ENCODE measurements at regions of chr5 and their contacts with region 1.

Region 1: GRCh38 chr5:172770675-172771438 is at the start of gene DUSP1:
- DNase-seq: peak; percentile 100
- H3K4me3 ChIP-seq: peak within 1 kb of the TSS; percentile 88 to 98 (median 90)
- H3K27ac ChIP-seq: peak within 1 kb of the TSS; percentile 99 to 100 (median 100)
- H3K4me1 ChIP-seq: peaks cover 31 to 69% (median 57%) of the 10 kb centered on the region in 4 donors
- H3K27me3 ChIP-seq: peaks cover 0 to 8% (median 0%) of the 10 kb centered on the region in 4 donors
- CTCF ChIP-seq: peak in 2 of 3 experiments; percentile 21 to 42
- EP300 ChIP-seq: peak; percentile 79
- POLR2A ChIP-seq: peak; percentile 100
- total RNA-seq, gene DUSP1: 455 to 718 (median 676) TPM

Region 2: DNA sequence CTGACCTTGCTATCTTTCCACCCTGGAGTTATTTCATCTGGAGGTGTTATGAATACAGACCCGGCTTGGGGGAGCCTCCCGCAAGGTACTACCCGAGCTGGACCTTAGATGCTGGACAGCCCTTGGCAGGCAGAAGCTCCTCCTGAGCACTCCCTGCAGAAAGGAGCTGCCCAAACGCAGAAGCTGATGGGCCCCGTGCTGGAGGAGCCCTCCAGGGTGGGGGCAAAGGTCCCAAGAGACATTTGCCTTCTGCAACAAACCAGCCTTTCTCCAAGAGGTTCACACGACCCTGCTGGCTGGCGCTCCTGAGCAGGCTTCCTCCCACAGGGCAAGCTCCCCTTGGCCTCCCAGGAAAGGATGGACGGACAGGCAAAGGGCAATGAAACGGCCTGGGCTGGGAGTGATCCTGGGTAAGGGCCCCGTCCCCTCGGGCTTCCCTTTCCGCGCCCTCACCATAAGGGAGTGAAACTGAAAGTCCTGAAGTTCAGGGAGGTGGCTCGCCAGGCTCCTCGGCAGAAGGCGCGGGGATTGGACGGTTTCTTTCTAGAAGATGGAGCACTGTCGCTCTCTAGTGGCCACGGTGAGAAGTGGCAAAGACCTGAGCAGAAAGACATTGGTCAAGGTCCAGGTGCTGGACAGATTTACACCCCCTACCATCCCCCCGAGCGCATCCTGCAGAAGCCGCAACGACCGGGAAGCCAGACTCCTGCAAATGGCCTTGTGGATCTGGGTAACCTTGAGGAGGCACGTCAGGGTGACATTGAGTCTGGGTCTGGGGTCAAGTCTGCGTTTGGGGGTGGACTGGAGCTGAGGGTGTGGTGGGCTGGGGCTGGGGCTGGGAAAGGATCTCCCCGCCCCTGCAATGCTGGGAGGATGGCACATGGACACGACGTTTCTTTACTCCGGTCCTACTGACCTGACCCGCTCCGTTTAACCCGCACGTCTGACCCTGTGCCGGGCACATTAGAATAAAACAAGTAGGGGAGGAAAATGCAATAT is 73.4 kb before region 1 on chr5:
- intact Hi-C with region 1: no loop called
- DNase-seq: peak; percentile 96
- H3K4me3 ChIP-seq: peak overlapping the region; percentile 46 to 79 (median 70)
- H3K27ac ChIP-seq: peak overlapping the region; percentile 70 to 84 (median 79)
- H3K4me1 ChIP-seq: peaks cover 64 to 76% (median 69%) of the 10 kb centered on the region in 4 donors
- H3K27me3 ChIP-seq: no peaks in the 10 kb centered on the region
- CTCF ChIP-seq: peak; percentile 92 to 95 (median 95)
- EP300 ChIP-seq: no peak
- POLR2A ChIP-seq: no peak

Region 3: GRCh38 chr5:172833686-172834414 is 63.0 kb after region 1 on chr5 and contains the start of gene ERGIC1:
- intact Hi-C with region 1: loop called (anchors 2 kb)
- DNase-seq: no peak
- H3K4me3 ChIP-seq: peak within 1 kb of the TSS; percentile 71 to 95 (median 86)
- H3K27ac ChIP-seq: peak within 1 kb of the TSS; percentile 84 to 91 (median 90)
- H3K4me1 ChIP-seq: peaks cover 28 to 50% (median 45%) of the 10 kb centered on the region in 4 donors
- H3K27me3 ChIP-seq: no peaks in the 10 kb centered on the region
- CTCF ChIP-seq: no peak
- EP300 ChIP-seq: no peak
- POLR2A ChIP-seq: peak; percentile 59
- total RNA-seq, gene ERGIC1: 105 to 161 (median 145) TPM

Region 4: DNA sequence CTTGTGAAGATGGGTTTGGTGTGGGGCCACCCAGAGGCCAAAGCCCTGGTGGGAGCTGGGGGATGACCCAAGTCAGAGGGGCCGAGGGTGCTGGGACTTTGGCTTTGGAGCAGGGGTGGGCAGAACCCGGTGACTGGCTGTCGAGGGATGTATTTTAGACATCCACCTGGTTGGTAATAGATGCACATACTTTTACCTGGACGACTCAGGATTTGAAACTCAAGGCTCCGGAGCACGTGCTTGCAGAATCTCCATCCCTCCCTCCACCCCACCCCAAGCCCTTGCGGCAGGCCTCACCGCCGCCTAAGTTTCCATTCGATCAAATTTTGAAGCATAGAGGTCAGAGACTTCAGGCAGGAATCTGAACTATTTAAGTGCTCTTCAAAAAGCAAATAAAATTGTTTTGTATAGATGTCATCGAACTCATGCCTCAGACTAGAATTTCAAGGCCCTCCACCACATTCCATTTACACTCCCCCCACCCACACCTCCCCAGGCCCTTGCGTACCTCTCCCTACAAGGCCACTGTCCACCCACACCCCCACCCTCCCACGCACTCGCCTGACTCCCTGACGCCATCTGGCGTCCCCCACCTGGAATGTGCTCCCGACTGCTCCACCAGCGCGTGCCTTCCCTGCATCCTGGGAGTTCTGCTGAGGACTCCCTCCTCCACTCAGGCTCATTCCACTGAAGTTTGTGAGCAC is 131.8 kb after region 1 on chr5:
- intact Hi-C with region 1: loop called (anchors 2 kb)
- DNase-seq: peak; percentile 97
- H3K4me3 ChIP-seq: no peak overlapping the region
- H3K27ac ChIP-seq: peak overlapping the region; percentile 90 to 99 (median 96)
- H3K4me1 ChIP-seq: peaks cover 70 to 96% (median 91%) of the 10 kb centered on the region in 4 donors
- H3K27me3 ChIP-seq: no peaks in the 10 kb centered on the region
- CTCF ChIP-seq: peak; percentile 51 to 56 (median 53)
- EP300 ChIP-seq: peak; percentile 94
- POLR2A ChIP-seq: no peak

Measured in esophagus muscularis mucosa (tissue), 4 donors.